CD8-positive, alpha-beta T cell (primary cell): ENCODE measurements at regions of chr6 and their contacts with region 1.

Region 1: DNA sequence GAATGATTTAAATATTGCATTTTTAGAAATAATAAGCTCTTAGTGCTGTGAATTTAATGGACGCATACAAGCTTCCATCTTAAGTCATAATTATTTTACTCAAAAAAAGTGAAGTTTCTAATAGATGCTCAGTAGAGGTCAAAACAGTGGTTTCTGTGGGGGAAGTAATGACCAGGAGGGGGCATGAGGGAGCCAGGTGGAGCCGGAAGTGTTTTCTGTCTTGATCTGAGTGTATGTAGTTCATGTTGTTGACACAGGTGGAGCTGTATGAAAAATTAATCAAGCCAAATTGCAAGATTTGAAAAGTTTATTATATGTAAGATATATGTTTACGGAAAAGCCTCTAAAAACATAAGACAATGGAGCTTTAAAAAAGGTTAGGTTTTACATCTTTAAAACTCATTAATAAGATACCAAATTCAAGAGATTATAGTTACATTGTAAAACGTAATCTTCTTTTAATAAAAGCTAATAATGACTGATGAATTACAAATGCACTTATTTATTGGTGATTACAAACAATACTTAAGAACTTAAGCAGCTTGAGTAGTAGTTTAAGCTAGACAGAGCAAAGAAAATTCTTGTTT is 68.0 kb downstream of the PLAGL1 start:
- DNase-seq: peak; percentile 7 to 76 (median 51)
- ATAC-seq: peak; percentile 94
- H3K4me3 ChIP-seq: no peak overlapping the region
- H3K4me3 Mint-ChIP-seq: no peak overlapping the region
- H3K27ac ChIP-seq: no peak overlapping the region
- H3K27ac Mint-ChIP-seq: no peak overlapping the region
- H3K4me1 ChIP-seq: peaks cover 5% of the 10 kb centered on the region
- H3K4me1 Mint-ChIP-seq: peaks cover 13% of the 10 kb centered on the region
- H3K27me3 ChIP-seq: no peaks in the 10 kb centered on the region
- H3K27me3 Mint-ChIP-seq: no peaks in the 10 kb centered on the region
- CTCF ChIP-seq: peak; percentile 93

Region 2: DNA sequence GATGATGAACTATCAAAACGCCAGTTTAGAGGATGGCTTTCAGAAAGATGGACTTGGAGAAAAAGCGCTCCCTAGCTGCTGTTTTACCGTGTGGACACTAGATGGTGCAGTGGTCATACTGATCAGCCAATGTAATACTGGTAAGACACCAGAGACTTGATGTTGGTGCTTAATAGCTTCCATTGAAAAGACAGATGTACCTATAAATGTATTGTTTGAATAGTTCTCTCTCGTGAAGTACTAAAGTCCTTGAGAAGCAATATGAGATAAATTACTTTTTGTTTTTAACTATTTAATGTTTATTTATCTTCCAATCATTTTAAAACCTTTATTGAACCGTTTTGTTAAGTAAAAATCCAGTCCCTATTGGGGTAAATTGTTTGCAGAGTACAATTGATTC is 364.7 kb before region 1 on chr6:
- CTCF ChIA-PET with region 1: interaction called, 19 read pairs
- POLR2A ChIA-PET with region 1: no interaction called
- intact Hi-C with region 1: loop called (anchors 1 to 2 kb)
- DNase-seq: peak; percentile 12 to 81 (median 46)
- ATAC-seq: peak; percentile 99
- H3K4me3 ChIP-seq: no peak overlapping the region
- H3K4me3 Mint-ChIP-seq: no peak overlapping the region
- H3K27ac ChIP-seq: no peak overlapping the region
- H3K27ac Mint-ChIP-seq: no peak overlapping the region
- H3K4me1 ChIP-seq: no peaks in the 10 kb centered on the region
- H3K4me1 Mint-ChIP-seq: no peaks in the 10 kb centered on the region
- H3K27me3 ChIP-seq: no peaks in the 10 kb centered on the region
- H3K27me3 Mint-ChIP-seq: no peaks in the 10 kb centered on the region
- CTCF ChIP-seq: peak; percentile 93

Region 3: DNA sequence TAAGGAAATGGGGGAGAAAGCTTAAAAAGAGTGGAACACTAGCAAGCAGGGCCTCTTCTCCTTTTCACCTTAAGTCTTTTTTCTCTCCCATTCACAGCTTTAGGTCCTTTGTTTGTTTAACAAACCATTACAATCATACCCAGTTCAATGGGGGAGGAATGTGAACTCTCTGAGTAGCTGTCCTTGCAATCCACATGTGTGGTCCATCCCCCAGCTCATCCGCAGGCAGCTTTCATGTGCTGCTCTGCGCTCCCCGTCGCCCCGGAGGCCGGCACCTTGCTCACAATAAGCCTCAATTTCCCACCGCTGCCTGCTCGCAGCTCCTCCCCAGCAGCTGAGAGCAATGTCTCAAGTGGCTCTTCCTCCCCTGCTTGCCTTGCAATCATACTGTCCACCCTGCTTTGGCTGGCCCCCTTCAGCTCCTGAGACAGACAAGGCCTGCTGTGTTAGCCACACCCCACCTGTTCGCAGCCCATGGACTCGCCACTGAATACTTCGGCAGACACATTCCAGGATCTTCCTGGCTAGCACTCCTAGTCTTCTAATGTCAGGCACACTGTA is 18.8 kb after region 1 on chr6:
- CTCF ChIA-PET with region 1: interaction called, 14 read pairs
- POLR2A ChIA-PET with region 1: no interaction called
- intact Hi-C with region 1: no loop called
- DNase-seq: no peak
- ATAC-seq: no peak
- H3K4me3 ChIP-seq: no peak overlapping the region
- H3K4me3 Mint-ChIP-seq: no peak overlapping the region
- H3K27ac ChIP-seq: no peak overlapping the region
- H3K27ac Mint-ChIP-seq: no peak overlapping the region
- H3K4me1 ChIP-seq: no peaks in the 10 kb centered on the region
- H3K4me1 Mint-ChIP-seq: no peaks in the 10 kb centered on the region
- H3K27me3 ChIP-seq: no peaks in the 10 kb centered on the region
- H3K27me3 Mint-ChIP-seq: no peaks in the 10 kb centered on the region
- CTCF ChIP-seq: no peak

Region 4: GRCh38 chr6:144063744-144064401 is 123.8 kb after region 1 on chr6:
- CTCF ChIA-PET with region 1: interaction called, 6 read pairs
- POLR2A ChIA-PET with region 1: no interaction called
- intact Hi-C with region 1: loop called in 1 of 2 experiments (anchors 1 kb)
- DNase-seq: peak; percentile 85 to 96 (median 91)
- ATAC-seq: peak; percentile 90
- H3K4me3 ChIP-seq: peak overlapping the region; percentile 93 to 97
- H3K4me3 Mint-ChIP-seq: peak overlapping the region; percentile 91
- H3K27ac ChIP-seq: peak overlapping the region; percentile 86 to 88
- H3K27ac Mint-ChIP-seq: peak overlapping the region; percentile 95
- H3K4me1 ChIP-seq: peaks cover 16% of the 10 kb centered on the region
- H3K4me1 Mint-ChIP-seq: peaks cover 30% of the 10 kb centered on the region
- H3K27me3 ChIP-seq: no peaks in the 10 kb centered on the region
- H3K27me3 Mint-ChIP-seq: no peaks in the 10 kb centered on the region
- CTCF ChIP-seq: no peak

Region 5: GRCh38 chr6:144090384-144090783 is 150.3 kb after region 1 on chr6:
- CTCF ChIA-PET with region 1: interaction called, 8 read pairs
- POLR2A ChIA-PET with region 1: no interaction called
- intact Hi-C with region 1: loop called (anchors 1 to 2 kb)
- DNase-seq: peak in 1 of 9 experiments; percentile 10
- ATAC-seq: no peak
- H3K4me3 ChIP-seq: no peak overlapping the region
- H3K4me3 Mint-ChIP-seq: no peak overlapping the region
- H3K27ac ChIP-seq: no peak overlapping the region
- H3K27ac Mint-ChIP-seq: no peak overlapping the region
- H3K4me1 ChIP-seq: peaks cover 18% of the 10 kb centered on the region
- H3K4me1 Mint-ChIP-seq: peaks cover 16% of the 10 kb centered on the region
- H3K27me3 ChIP-seq: no peaks in the 10 kb centered on the region
- H3K27me3 Mint-ChIP-seq: no peaks in the 10 kb centered on the region
- CTCF ChIP-seq: no peak

Region 6: DNA sequence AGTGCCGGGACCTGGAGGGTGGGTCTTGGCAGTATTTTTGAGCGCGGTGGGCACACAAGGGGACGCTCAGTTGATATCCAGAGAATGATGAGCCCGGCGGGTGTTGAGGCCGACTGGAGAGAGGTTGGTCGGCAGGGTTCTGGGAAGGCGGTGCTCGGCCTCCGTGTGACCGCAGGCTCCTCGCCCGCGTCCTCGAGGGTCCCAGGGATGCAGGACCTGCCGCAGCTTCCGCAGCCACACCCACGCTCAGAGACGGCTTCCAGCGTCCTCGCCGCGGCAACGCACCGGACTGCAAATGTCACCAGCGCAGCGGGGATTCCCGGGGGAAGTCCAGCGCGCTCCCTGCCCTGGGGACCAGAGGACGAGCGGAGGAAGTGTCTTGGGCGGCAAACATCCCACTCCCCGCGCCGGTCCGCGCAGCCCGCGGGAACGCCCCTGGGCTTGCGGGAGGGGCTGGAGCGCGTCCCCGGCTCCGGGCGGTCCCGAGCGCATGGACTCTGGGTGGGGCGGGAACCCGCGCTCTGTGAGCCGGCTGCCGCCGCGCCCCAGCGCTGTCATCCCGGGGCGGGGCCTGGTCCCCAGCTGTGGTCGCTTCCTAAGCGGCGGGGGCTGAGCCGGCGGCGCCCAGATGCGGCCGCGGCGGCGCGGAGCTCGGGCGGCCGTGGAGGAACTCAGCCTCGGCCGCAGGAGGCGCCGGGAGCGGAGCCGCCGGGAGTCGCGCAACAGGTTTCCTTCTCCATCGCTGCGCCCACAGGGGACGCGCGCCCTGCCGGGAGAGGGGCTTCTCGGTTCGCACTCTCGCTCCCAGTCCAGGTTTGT is 210.0 kb after region 1 on chr6 and contains the start of gene STX11:
- CTCF ChIA-PET with region 1: no interaction called
- POLR2A ChIA-PET with region 1: no interaction called
- intact Hi-C with region 1: loop called in 1 of 2 experiments (anchors 5 kb)
- DNase-seq: peak; percentile 27 to 89 (median 67)
- ATAC-seq: peak; percentile 56
- H3K4me3 ChIP-seq: peak within 1 kb of the TSS; percentile 68 to 71
- H3K4me3 Mint-ChIP-seq: peak within 1 kb of the TSS; percentile 94
- H3K27ac ChIP-seq: peak within 1 kb of the TSS; percentile 66 to 90
- H3K27ac Mint-ChIP-seq: peak within 1 kb of the TSS; percentile 95
- H3K4me1 ChIP-seq: peaks cover 5% of the 10 kb centered on the region
- H3K4me1 Mint-ChIP-seq: peaks cover 19% of the 10 kb centered on the region
- H3K27me3 ChIP-seq: no peaks in the 10 kb centered on the region
- H3K27me3 Mint-ChIP-seq: no peaks in the 10 kb centered on the region
- CTCF ChIP-seq: no peak
- total RNA-seq, gene STX11: 17.7 to 18.9 TPM